Breast epithelium (tissue), 4 donors: ENCODE measurements at regions of chr6 and their contacts with region 1.

Region 1: DNA sequence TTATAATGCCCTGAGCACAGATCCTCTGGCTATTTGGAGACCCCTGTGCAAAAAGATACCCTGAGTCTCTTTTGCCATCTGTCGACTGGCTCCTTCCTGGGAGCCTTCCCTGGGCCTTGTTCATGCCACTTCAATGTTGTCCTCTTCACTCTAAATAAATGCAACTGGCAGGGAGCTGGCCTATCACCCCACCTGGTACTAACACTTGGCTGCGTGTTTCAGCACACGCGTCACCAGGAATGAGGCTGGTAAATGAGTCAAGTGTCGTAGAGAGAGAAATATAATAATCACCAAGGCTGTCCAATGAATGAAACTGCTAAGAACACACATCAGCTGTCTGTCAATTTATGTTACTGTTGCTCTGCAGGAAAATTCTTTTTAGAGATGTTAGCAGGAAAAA is 374.6 kb upstream of the JARID2 start:
- DNase-seq: no peak
- H3K4me3 ChIP-seq: no peak overlapping the region
- H3K27ac ChIP-seq: no peak overlapping the region
- H3K4me1 ChIP-seq: no peaks in the 10 kb centered on the region
- H3K27me3 ChIP-seq: no peaks in the 10 kb centered on the region
- CTCF ChIP-seq: no peak
- POLR2A ChIP-seq: no peak

Region 2: GRCh38 chr6:16183187-16183664 is 1312.0 kb after region 1 on chr6:
- intact Hi-C with region 1: loop called (anchors 5 kb)
- DNase-seq: no peak
- H3K4me3 ChIP-seq: no peak overlapping the region
- H3K27ac ChIP-seq: no peak overlapping the region
- H3K4me1 ChIP-seq: no peaks in the 10 kb centered on the region
- H3K27me3 ChIP-seq: no peaks in the 10 kb centered on the region
- CTCF ChIP-seq: peak; percentile 68 to 75 (median 71)
- POLR2A ChIP-seq: no peak